Colonic mucosa (tissue), 4 donors: ENCODE measurements at regions of chr6 and their contacts with region 1.

Region 1: GRCh38 chr6:35731736-35732532 is 4.9 kb upstream of the ARMC12 start:
- DNase-seq: peak; percentile 97
- H3K4me3 ChIP-seq: peak overlapping the region; percentile 66
- H3K27ac ChIP-seq: peak overlapping the region; percentile 97
- H3K4me1 ChIP-seq: peaks cover 43% of the 10 kb centered on the region
- H3K27me3 ChIP-seq: no peaks in the 10 kb centered on the region
- CTCF ChIP-seq: no peak

Region 2: DNA sequence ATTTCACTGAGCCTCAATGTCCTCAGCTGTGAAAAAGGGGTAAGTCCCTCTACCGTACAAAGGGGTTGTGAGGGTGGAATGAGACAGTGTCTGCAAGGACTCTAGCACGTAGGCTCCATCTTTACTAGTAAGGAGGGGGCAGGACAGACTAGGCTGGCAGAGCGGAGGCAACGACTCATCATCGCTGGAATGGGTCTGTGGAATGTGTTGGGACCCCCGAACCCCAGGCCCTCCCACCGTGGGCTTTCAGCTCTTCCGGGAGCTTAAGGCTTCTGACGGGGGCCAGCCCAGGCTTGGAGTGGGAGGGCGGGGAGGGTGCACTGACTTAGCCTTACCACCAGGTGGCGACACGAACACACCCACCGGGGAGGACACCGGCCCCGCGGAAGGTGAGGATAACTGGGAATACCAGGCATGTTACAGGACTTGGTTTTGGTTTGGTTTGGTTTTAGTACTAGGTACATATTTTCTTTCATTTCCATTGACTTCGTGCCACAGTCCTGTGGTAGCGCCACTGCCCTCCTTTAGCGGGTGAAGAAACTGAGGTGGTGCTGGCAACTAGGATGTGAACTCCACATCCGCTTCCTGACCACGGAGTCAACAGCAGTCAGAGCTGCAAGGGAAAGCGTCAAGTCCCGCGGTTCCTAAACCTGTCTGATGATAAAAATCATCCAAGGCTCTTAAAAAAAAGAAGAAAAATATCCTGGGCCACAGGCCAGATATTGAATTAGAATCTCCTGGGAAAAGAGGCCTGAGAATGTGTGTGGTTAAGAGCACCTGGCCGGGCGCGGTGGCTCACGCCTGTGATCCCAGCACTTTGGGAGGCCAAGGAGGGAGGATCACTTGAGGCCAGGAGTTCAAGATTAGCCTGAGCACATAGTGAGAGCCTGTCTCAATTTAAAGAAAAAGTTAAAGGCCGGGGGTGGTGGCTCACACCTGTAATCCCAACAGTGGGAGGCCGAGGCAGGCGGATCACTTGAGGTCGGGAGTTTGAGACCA is 209.0 kb before region 1 on chr6:
- intact Hi-C with region 1: loop called (anchors 2 kb)
- DNase-seq: peak; percentile 76
- H3K4me3 ChIP-seq: no peak overlapping the region
- H3K27ac ChIP-seq: no peak overlapping the region
- H3K4me1 ChIP-seq: no peaks in the 10 kb centered on the region
- H3K27me3 ChIP-seq: no peaks in the 10 kb centered on the region
- CTCF ChIP-seq: peak; percentile 98

Region 3: DNA sequence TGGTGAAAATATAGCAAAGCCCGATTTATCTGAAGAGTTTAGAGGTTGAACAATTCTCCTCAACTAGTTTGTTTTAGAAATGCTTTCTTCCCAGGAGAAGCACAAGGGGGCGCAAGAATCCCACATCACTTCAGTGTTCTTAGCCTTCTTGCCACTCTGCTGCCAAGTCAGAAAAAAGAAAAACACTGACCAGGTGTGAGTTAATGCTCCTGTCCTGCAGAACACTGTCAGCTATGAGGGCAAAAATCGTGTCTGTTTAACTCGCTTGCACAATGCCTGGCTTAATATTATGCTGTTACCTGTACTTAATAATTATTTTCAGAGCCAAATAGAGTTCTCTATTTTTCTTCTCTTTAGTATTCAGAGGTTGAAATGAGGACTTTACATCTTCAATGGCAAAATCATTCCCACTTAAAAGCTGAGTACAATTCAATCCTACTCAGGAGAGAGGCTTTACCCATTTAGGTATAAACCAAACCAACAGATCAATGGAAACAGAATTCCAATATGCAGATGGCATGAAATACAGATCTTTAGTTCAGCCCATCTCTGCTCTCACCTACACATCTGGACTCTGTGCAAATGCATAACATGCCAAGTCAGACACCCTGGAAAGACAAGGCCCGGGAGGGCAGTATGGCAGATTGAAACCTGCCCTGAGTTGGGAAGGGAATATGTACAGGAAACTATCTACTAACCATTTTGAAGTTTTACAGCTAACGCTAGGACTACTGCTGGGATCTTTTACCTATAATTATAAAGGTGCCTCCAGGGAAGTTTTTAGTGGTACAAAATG is 147.8 kb before region 1 on chr6:
- intact Hi-C with region 1: loop called (anchors 2 kb)
- DNase-seq: peak; percentile 74
- H3K4me3 ChIP-seq: no peak overlapping the region
- H3K27ac ChIP-seq: no peak overlapping the region
- H3K4me1 ChIP-seq: no peaks in the 10 kb centered on the region
- H3K27me3 ChIP-seq: no peaks in the 10 kb centered on the region
- CTCF ChIP-seq: peak; percentile 78

Region 4: GRCh38 chr6:35688581-35689322 is 43.2 kb before region 1 on chr6 and contains the start of gene FKBP5:
- intact Hi-C with region 1: loop called (anchors 2 kb)
- DNase-seq: peak; percentile 95
- H3K4me3 ChIP-seq: peak within 1 kb of the TSS; percentile 94
- H3K27ac ChIP-seq: peak within 1 kb of the TSS; percentile 84
- H3K4me1 ChIP-seq: no peaks in the 10 kb centered on the region
- H3K27me3 ChIP-seq: no peaks in the 10 kb centered on the region
- CTCF ChIP-seq: no peak
- total RNA-seq, gene FKBP5: 29.1 to 54.7 TPM

Region 5: GRCh38 chr6:35698858-35699257 is 33.1 kb before region 1 on chr6:
- intact Hi-C with region 1: no loop called
- DNase-seq: no peak
- H3K4me3 ChIP-seq: no peak overlapping the region
- H3K27ac ChIP-seq: no peak overlapping the region
- H3K4me1 ChIP-seq: no peaks in the 10 kb centered on the region
- H3K27me3 ChIP-seq: no peaks in the 10 kb centered on the region
- CTCF ChIP-seq: no peak